Right lobe of liver (tissue), 6 donors: ENCODE measurements at regions of chr16 and their contacts with region 1.

Region 1: DNA sequence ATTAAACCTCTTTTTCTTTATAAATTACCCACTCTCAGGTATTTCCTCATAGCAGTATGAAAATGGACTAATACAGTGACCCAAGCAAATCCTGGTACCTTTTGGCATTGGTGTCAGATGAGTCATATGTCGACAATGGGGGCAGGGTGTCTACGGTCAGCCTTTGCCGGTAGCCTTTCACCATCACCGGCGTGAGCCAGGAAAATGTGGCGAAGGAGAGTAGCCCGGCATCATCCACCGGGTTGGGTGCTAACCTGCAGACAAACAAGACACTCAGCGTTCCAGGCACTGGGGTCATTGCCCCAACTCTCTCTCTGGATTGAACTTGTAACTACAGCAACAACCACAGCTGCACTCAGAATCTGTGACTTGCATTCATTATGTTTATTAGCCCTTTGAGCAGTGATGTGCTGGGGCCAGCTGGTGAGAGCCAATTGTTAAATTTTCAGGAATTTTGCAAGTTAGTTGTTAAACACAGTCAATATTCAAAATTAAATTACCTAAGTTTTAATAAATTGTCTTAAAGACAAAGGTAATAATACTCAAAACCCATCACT is 11.9 kb downstream of the ABCC12 start:
- DNase-seq: no peak
- ATAC-seq: no peak
- H3K4me3 ChIP-seq: no peak overlapping the region
- H3K27ac ChIP-seq: no peak overlapping the region
- H3K4me1 ChIP-seq: no peaks in the 10 kb centered on the region
- H3K27me3 ChIP-seq: no peaks in the 10 kb centered on the region
- CTCF ChIP-seq: no peak
- POLR2A ChIP-seq: no peak

Region 2: GRCh38 chr16:47037746-47038458 is 1106.0 kb before region 1 on chr16:
- intact Hi-C with region 1: loop called in 1 of 2 experiments (anchors 10 kb)
- DNase-seq: peak; percentile 89 to 92 (median 90)
- ATAC-seq: peak; percentile 99 to 100 (median 100)
- H3K4me3 ChIP-seq: peak overlapping the region; percentile 56 to 63 (median 58)
- H3K27ac ChIP-seq: peak overlapping the region in 1 of 3 donors; percentile 16
- H3K4me1 ChIP-seq: no peaks in the 10 kb centered on the region
- H3K27me3 ChIP-seq: no peaks in the 10 kb centered on the region
- CTCF ChIP-seq: peak; percentile 88 to 98 (median 96)
- POLR2A ChIP-seq: no peak